OCI-LY7 (cell line): ENCODE measurements at regions of chr1 and their contacts with region 1.

Region 1: GRCh38 chr1:202750758-202751157 is 40.5 kb upstream of the SYT2 start:
- DNase-seq: no peak
- H3K4me3 ChIP-seq: no peak overlapping the region
- H3K27ac ChIP-seq: no peak overlapping the region
- H3K4me1 ChIP-seq: no peaks in the 10 kb centered on the region
- CTCF ChIP-seq: peak; percentile 47

Region 2: GRCh38 chr1:202781180-202781579 is 30.4 kb after region 1 on chr1:
- CTCF ChIA-PET with region 1: no interaction called
- POLR2A ChIA-PET with region 1: no interaction called
- intact Hi-C with region 1: no loop called
- DNase-seq: no peak
- H3K4me3 ChIP-seq: no peak overlapping the region
- H3K27ac ChIP-seq: no peak overlapping the region
- H3K4me1 ChIP-seq: no peaks in the 10 kb centered on the region
- CTCF ChIP-seq: no peak

Region 3: GRCh38 chr1:202998836-202999750 is 248.3 kb after region 1 on chr1:
- CTCF ChIA-PET with region 1: no interaction called
- POLR2A ChIA-PET with region 1: no interaction called
- intact Hi-C with region 1: loop called (anchors 5 kb)
- DNase-seq: peak; percentile 83
- H3K4me3 ChIP-seq: peak overlapping the region; percentile 22
- H3K27ac ChIP-seq: peak overlapping the region; percentile 65
- H3K4me1 ChIP-seq: peaks cover 16% of the 10 kb centered on the region
- CTCF ChIP-seq: peak; percentile 96